Pancreas (tissue), 10 donors: ENCODE measurements at regions of chr4 and their contacts with region 1.

Region 1: GRCh38 chr4:73653695-73654106 is 33.5 kb upstream of the RASSF6 start:
- DNase-seq: peak in 5 of 6 donors; percentile 72 to 82 (median 77)
- ATAC-seq: peak; percentile 95 to 97 (median 96)
- H3K4me3 ChIP-seq: no peak overlapping the region
- H3K27ac ChIP-seq: no peak overlapping the region
- H3K4me1 ChIP-seq: peaks cover 0 to 13% (median 7%) of the 10 kb centered on the region in 3 donors
- H3K27me3 ChIP-seq: no peaks in the 10 kb centered on the region
- CTCF ChIP-seq: peak; percentile 24 to 56 (median 38)

Region 2: GRCh38 chr4:73311428-73311827 is 342.3 kb before region 1 on chr4:
- intact Hi-C with region 1: loop called in 1 of 3 experiments (anchors 10 kb)
- DNase-seq: no peak
- ATAC-seq: peak; percentile 35 to 73 (median 56)
- H3K4me3 ChIP-seq: no peak overlapping the region
- H3K27ac ChIP-seq: no peak overlapping the region
- H3K4me1 ChIP-seq: no peaks in the 10 kb centered on the region
- H3K27me3 ChIP-seq: no peaks in the 10 kb centered on the region
- CTCF ChIP-seq: peak in 2 of 4 donors; percentile 23 to 26

Region 3: DNA sequence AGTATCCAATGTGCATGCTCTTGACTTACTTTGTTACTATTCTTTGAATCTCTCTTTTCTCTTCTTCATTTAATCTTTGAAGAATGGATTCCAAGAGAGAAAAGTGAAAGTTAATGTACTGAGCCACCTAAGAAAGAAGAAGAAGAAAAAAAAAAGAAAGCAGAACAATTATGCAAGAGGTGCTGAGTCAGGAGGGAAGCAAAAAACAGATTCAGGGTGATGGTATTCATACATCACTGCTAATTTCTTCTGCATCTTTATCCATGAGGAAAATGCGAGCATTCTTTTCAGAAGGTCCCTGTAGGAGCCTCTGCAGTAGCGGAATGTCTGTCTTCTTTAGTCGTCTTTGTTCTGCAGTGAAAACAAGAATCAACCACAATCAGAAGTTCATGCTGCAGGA is 77.3 kb before region 1 on chr4:
- intact Hi-C with region 1: loop called in 1 of 3 experiments (anchors 5 kb)
- DNase-seq: no peak
- ATAC-seq: no peak
- H3K4me3 ChIP-seq: no peak overlapping the region
- H3K27ac ChIP-seq: no peak overlapping the region
- H3K4me1 ChIP-seq: peaks cover 0 to 16% (median 15%) of the 10 kb centered on the region in 3 donors
- H3K27me3 ChIP-seq: no peaks in the 10 kb centered on the region
- CTCF ChIP-seq: no peak

Region 4: DNA sequence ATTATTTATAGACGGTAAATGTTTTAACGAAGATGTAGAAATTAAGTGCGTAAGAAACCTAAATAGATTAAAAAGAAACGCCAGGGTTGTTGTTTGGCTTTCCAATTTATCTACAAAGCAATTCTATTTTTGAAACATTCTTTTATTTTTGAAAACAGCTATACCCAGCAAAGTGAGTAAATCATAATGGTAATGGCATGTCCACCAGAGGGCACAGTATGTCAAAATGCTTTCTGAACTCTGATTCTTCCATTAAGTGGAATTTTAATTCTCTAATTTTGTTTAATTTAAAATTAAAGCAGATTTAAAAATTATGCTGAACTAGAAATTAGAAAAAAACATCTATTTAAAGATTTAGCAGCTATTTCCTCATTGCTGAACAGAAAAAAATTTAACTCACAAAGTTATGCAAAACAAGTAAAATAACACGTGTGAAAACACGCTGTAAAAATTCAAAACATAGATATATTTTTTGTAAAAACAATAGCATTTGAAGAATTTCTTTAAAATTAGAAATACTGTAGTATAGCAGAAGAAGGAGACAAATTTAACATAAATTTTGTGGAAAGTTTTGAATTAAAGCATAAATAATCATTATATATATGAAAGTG is 60.0 kb before region 1 on chr4:
- intact Hi-C with region 1: loop called in 2 of 3 experiments (anchors 5 to 10 kb)
- DNase-seq: no peak
- ATAC-seq: no peak
- H3K4me3 ChIP-seq: no peak overlapping the region
- H3K27ac ChIP-seq: no peak overlapping the region
- H3K4me1 ChIP-seq: peaks cover 31 to 43% (median 38%) of the 10 kb centered on the region in 3 donors
- H3K27me3 ChIP-seq: no peaks in the 10 kb centered on the region
- CTCF ChIP-seq: peak in 2 of 4 donors; percentile 26 to 30

Region 5: GRCh38 chr4:73929278-73929677 is 275.6 kb after region 1 on chr4:
- intact Hi-C with region 1: no loop called
- DNase-seq: no peak
- ATAC-seq: no peak
- H3K4me3 ChIP-seq: no peak overlapping the region
- H3K27ac ChIP-seq: no peak overlapping the region
- H3K4me1 ChIP-seq: peaks cover 0 to 2% (median 0%) of the 10 kb centered on the region in 3 donors
- H3K27me3 ChIP-seq: peaks cover 0 to 8% (median 0%) of the 10 kb centered on the region in 4 donors
- CTCF ChIP-seq: no peak